ENCODE measurements at regions of chr3 and their contacts with region 1.

Region 1: DNA sequence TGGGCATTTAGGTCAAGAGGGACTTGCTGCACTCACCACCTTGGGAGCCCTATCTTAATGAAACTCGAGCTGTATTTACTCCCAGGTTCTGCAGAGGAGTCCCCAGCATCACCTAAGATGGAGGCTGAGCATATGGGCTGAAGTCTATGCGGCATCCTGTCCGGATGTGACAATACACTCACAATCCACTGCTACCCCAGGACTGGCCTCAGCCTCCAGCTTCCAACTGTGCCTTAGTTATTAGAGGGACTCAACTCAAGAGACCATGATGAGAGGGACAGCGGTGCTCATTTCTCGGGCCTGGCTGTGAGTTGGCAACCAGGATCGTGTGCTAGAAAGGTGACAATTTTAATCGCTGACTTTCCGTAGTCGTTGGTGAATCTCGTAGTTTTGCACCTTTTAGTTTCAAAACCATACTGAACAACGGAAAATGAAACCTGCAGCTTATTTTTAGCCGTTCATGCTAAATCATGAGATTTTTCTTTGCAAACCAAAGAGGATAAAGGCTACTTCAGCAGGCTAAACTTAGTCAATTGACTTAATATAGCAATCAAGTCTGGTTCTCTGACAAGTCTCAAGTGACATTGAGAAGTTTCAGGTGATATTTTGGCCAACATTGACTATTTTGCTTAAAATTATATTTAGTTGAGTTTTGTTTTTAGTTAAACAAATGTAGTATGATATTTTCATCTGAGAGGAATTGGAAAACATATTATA is 11.1 kb downstream of the ZBTB38 start:
- DNase-seq: peak; percentile 77
- H3K4me3 Mint-ChIP-seq: peak overlapping the region; percentile 49
- H3K27ac Mint-ChIP-seq: peak overlapping the region; percentile 97
- H3K4me1 Mint-ChIP-seq: peaks cover 65% of the 10 kb centered on the region
- H3K27me3 Mint-ChIP-seq: no peaks in the 10 kb centered on the region

Region 2: DNA sequence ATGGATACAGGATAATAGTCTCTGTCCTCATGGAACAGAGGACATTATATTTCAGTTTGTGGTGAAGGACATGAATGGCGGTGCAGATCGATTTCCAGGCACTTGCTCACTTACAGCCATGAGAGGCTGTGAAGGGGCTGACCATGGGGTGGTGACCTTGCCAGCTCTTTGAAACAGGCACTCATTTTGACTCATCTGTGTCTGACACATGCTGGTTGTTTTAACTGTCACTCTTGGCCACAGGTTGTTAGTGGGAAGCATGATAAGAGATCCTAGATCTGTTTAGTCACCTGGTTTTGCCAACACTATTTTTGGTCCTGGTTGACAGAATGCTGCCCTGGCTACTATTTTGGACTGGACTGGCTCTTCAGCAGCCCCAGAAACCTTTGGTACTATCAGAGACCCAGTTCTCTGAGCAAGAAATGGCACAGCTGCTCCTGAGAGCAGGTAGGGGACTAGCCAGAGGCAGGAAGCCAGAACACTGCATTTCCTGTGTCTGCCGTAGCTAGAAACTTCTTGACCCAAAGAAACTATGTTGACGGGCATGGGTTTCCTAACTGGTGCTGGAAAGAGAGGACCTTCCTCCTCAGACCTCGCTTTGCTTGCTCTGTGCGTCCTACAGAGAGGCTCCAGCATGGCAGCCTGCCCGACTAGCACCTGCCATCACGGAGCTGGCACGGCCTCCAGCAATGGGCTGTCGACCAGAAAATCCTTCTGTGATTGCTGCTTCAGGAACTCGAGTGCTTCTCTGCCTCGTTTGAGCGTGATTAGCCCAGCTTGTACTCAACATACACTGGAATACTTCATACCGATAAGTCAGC is 141.5 kb before region 1 on chr3:
- CTCF ChIA-PET with region 1: no interaction called
- POLR2A ChIA-PET with region 1: no interaction called
- intact Hi-C with region 1: loop called (anchors 2 kb)
- DNase-seq: peak; percentile 67
- H3K4me3 Mint-ChIP-seq: peak overlapping the region; percentile 4
- H3K27ac Mint-ChIP-seq: peak overlapping the region; percentile 65
- H3K4me1 Mint-ChIP-seq: peaks cover 38% of the 10 kb centered on the region
- H3K27me3 Mint-ChIP-seq: no peaks in the 10 kb centered on the region

Region 3: GRCh38 chr3:141346418-141346817 is 33.0 kb before region 1 on chr3:
- CTCF ChIA-PET with region 1: no interaction called
- POLR2A ChIA-PET with region 1: no interaction called
- intact Hi-C with region 1: no loop called
- DNase-seq: no peak
- H3K4me3 Mint-ChIP-seq: no peak overlapping the region
- H3K27ac Mint-ChIP-seq: no peak overlapping the region
- H3K4me1 Mint-ChIP-seq: no peaks in the 10 kb centered on the region
- H3K27me3 Mint-ChIP-seq: peaks cover 1% of the 10 kb centered on the region

Measured in activated CD4-positive, alpha-beta memory T cell treated with anti-CD3 and anti-CD28 coated beads for 36 hours (primary cell).